Panc1 (cell line): ENCODE measurements at regions of chr5 and their contacts with region 1.

Region 1: GRCh38 chr5:91383027-91383955 is at the start of gene ARRDC3:
- DNase-seq: peak; percentile 90
- ATAC-seq: peak; percentile 84
- H3K4me3 ChIP-seq: peak within 1 kb of the TSS; percentile 84
- H3K27ac ChIP-seq: peak within 1 kb of the TSS; percentile 99
- H3K4me1 ChIP-seq: peaks cover 19% of the 10 kb centered on the region; the same call in 1 of the 2 replicates
- H3K27me3 ChIP-seq: no peaks in the 10 kb centered on the region
- CTCF ChIP-seq: no peak
- total RNA-seq, gene ARRDC3: 33.0 TPM

Region 2: GRCh38 chr5:90866333-90866732 is 517.0 kb before region 1 on chr5:
- CTCF ChIA-PET with region 1: interaction called, 4 read pairs
- POLR2A ChIA-PET with region 1: no interaction called
- in situ Hi-C with region 1: no loop called
- intact Hi-C with region 1: loop called (anchors 2 kb)
- DNase-seq: peak; percentile 17
- ATAC-seq: peak; percentile 80; the same call in 1 of the 2 replicates
- H3K4me3 ChIP-seq: no peak overlapping the region
- H3K27ac ChIP-seq: no peak overlapping the region
- H3K4me1 ChIP-seq: no peaks in the 10 kb centered on the region
- H3K27me3 ChIP-seq: peaks cover 2% of the 10 kb centered on the region; the same call in 1 of the 2 replicates
- CTCF ChIP-seq: peak; percentile 56; the same call in 1 of the 2 replicates

Region 3: GRCh38 chr5:91101600-91102379 is 281.5 kb before region 1 on chr5:
- CTCF ChIA-PET with region 1: no interaction called
- POLR2A ChIA-PET with region 1: no interaction called
- in situ Hi-C with region 1: no loop called
- intact Hi-C with region 1: loop called (anchors 2 kb)
- DNase-seq: peak; percentile 67
- ATAC-seq: peak; percentile 98
- H3K4me3 ChIP-seq: no peak overlapping the region
- H3K27ac ChIP-seq: no peak overlapping the region
- H3K4me1 ChIP-seq: 0 out of 2 replicates have a peak, but pooled peaks cover 3% of the 10 kb centered on the region
- H3K27me3 ChIP-seq: no peaks in the 10 kb centered on the region
- CTCF ChIP-seq: peak; percentile 86

Region 4: GRCh38 chr5:91194824-91195381 is 188.4 kb before region 1 on chr5:
- CTCF ChIA-PET with region 1: no interaction called
- POLR2A ChIA-PET with region 1: interaction called, 11 read pairs
- in situ Hi-C with region 1: no loop called
- intact Hi-C with region 1: no loop called
- DNase-seq: no peak
- ATAC-seq: no peak
- H3K4me3 ChIP-seq: no peak overlapping the region
- H3K27ac ChIP-seq: no peak overlapping the region
- H3K4me1 ChIP-seq: peaks cover 3% of the 10 kb centered on the region; the same call in 1 of the 2 replicates
- H3K27me3 ChIP-seq: no peaks in the 10 kb centered on the region
- CTCF ChIP-seq: no peak

Region 5: GRCh38 chr5:91225848-91226686 is 157.2 kb before region 1 on chr5:
- CTCF ChIA-PET with region 1: interaction called, 5 read pairs
- POLR2A ChIA-PET with region 1: interaction called, 3 read pairs
- in situ Hi-C with region 1: no loop called
- intact Hi-C with region 1: loop called (anchors 2 kb)
- DNase-seq: peak; percentile 38
- ATAC-seq: peak; percentile 89
- H3K4me3 ChIP-seq: no peak overlapping the region
- H3K27ac ChIP-seq: no peak overlapping the region
- H3K4me1 ChIP-seq: no peaks in the 10 kb centered on the region
- H3K27me3 ChIP-seq: no peaks in the 10 kb centered on the region
- CTCF ChIP-seq: peak; percentile 80

Region 6: DNA sequence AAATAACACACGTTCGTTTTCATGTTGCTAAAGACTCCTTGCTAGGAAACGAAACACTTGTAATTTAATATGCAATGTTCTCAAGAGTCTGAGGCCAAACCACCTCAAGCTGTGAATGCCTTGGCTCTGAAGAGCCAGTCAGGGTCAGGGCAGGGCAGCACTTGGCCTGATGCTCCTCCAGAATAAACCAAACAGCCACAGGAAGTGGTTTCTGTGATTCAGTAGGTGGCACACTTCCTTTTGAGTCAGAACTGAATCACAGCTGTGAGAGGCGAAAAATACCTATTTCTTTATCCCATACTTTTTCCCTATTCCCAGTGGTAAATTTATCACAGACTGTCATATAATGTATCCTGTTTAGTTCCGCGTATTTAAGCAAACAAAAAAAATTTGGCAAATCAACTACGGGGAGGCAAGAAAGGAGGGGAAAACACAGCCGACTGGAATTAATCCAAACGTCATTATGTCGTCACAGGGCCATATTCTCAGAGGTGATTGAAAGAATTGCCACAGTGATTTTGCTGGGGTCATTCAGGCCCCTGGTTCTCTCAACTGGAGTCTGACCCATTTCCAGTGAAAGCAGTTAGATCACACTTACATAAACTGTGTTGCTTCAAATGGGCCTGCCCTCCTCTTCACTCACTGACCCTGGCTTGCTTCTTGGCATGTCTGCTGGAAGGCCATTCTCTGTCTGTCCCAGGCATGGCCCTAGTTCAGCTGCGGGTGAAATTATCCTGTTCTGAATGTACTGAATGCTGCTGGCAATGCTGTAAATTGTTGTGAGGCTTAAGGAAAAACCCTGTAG is 71.4 kb before region 1 on chr5:
- CTCF ChIA-PET with region 1: no interaction called
- POLR2A ChIA-PET with region 1: interaction called, 9 read pairs
- in situ Hi-C with region 1: no loop called
- intact Hi-C with region 1: loop called (anchors 5 kb)
- DNase-seq: peak; percentile 97
- ATAC-seq: peak; percentile 94
- H3K4me3 ChIP-seq: no peak overlapping the region
- H3K27ac ChIP-seq: peak overlapping the region; percentile 91
- H3K4me1 ChIP-seq: peaks cover 42% of the 10 kb centered on the region
- H3K27me3 ChIP-seq: no peaks in the 10 kb centered on the region
- CTCF ChIP-seq: no peak